CD4-positive, alpha-beta memory T cell (primary cell): ENCODE measurements at regions of chr6 and their contacts with region 1.

Region 1: GRCh38 chr6:111873178-111874024 is at the start of gene FYN:
- DNase-seq: peak; percentile 98
- H3K4me3 ChIP-seq: peak within 1 kb of the TSS; percentile 88 to 91
- H3K4me3 Mint-ChIP-seq: peak within 1 kb of the TSS; percentile 96 to 99 (median 98)
- H3K27ac ChIP-seq: peak within 1 kb of the TSS; percentile 88
- H3K27ac Mint-ChIP-seq: peak within 1 kb of the TSS; percentile 93 to 99 (median 98)
- H3K4me1 ChIP-seq: peaks cover 38% of the 10 kb centered on the region
- H3K4me1 Mint-ChIP-seq: peaks cover 27 to 55% (median 37%) of the 10 kb centered on the region in 4 donors
- H3K27me3 ChIP-seq: no peaks in the 10 kb centered on the region
- H3K27me3 Mint-ChIP-seq: no peaks in the 10 kb centered on the region
- total RNA-seq, gene FYN: 664 to 713 TPM

Region 2: DNA sequence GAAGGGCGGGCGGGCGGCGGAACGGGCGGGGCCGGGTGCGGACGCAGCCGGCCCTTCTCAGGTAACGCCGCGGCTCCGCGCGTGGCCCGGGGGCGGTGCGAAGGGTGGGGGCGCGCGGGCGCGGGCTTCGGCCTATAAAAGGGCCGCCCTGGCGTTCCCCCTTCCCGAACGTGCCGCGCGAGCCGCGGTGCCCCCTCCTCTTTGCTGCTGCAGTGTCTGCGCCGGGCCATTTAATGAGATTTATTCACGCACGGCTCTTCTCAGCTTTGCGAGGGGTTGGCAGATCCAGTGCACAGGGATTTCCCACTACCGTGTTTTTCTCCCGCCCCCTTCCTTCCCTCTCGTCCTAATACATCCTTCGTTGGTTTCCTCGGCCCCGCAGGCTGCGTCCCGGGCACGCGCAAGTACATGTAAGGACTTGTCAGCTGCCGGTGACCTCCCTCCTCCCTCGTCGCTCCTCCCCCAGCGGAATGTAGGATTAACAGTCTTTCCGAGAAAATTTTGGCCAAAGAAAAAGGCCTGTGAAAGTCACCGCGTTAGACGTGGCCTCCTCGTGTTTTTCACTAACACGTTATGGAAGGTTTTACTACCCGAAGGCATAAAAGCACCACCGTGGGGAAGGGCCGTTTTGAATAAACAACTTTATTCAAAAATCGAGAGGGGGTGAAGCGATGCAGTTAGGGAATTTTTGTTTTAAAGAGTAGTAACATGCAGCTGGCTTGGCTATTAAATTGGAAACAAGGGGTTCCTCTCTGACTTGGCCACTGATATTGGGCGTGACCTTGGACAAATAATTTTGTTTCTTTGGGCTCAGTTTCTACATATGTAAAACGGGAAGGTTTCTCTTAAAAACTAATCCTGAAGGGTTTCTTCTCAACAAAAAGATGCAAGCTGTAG is 389.4 kb before region 1 on chr6:
- CTCF ChIA-PET with region 1: no interaction called
- POLR2A ChIA-PET with region 1: no interaction called
- intact Hi-C with region 1: loop called (anchors 10 kb)
- DNase-seq: peak in 3 of 5 donors; percentile 89
- H3K4me3 ChIP-seq: peak overlapping the region; percentile 74
- H3K4me3 Mint-ChIP-seq: peak overlapping the region; percentile 91 to 99 (median 98)
- H3K27ac ChIP-seq: peak overlapping the region; percentile 80
- H3K27ac Mint-ChIP-seq: peak overlapping the region; percentile 97 to 100 (median 98)
- H3K4me1 ChIP-seq: peaks cover 57% of the 10 kb centered on the region
- H3K4me1 Mint-ChIP-seq: peaks cover 33 to 58% (median 45%) of the 10 kb centered on the region in 4 donors
- H3K27me3 ChIP-seq: no peaks in the 10 kb centered on the region
- H3K27me3 Mint-ChIP-seq: peaks cover 0 to 2% of the 10 kb centered on the region in 2 donors

Region 3: DNA sequence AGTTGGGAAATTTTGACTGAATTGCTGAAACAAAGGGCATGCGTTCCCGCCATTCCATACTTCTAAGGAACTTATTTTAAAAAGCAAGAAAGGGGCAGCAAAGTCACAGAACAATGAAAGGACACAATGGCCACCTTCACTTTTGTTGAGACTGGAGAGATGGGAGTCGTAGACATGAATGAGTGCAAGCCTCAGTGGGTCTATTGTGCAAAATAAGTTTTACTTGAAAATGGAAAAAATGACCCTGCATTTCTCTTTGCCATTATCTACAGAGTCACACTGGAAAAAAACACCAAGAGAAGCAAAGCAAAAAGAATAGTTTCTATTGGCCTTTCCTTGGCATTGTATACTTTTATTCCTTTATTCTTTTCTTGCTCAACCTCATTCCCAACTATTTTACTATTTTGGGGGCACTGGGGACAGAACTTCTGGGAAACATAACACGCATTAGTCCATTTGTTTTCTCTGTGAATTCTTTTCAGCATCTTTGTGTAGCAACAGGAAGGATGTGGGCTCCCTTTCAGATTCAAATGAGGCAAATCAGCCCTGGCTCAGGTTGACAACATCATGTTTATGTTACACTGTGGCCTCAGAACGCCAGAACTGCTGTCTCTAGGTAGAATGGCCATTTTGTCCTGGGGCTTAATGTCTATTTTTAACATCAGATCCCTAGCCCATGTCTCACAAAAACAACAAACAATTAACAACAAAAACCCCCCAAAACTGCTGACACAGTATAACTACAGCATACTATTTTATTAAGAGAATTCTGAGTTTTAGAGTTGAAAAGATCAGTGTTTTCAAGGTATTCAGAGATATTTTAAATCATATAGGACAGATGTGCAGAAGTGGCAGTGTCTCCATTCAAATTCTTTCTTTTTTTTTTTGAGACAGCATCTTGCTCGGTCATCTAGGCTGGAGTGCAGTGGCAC is 122.4 kb before region 1 on chr6:
- CTCF ChIA-PET with region 1: interaction called, 3 read pairs
- POLR2A ChIA-PET with region 1: interaction called, 32 read pairs
- intact Hi-C with region 1: no loop called
- DNase-seq: peak; percentile 82 to 89 (median 85)
- H3K4me3 ChIP-seq: peak overlapping the region in 1 of 2 donors; percentile 10
- H3K4me3 Mint-ChIP-seq: peak overlapping the region; percentile 58 to 91 (median 79)
- H3K27ac ChIP-seq: peak overlapping the region; percentile 74
- H3K27ac Mint-ChIP-seq: peak overlapping the region; percentile 97 to 100 (median 99)
- H3K4me1 ChIP-seq: peaks cover 100% of the 10 kb centered on the region
- H3K4me1 Mint-ChIP-seq: peaks cover 81 to 98% (median 90%) of the 10 kb centered on the region in 4 donors
- H3K27me3 ChIP-seq: no peaks in the 10 kb centered on the region
- H3K27me3 Mint-ChIP-seq: no peaks in the 10 kb centered on the region

Region 4: DNA sequence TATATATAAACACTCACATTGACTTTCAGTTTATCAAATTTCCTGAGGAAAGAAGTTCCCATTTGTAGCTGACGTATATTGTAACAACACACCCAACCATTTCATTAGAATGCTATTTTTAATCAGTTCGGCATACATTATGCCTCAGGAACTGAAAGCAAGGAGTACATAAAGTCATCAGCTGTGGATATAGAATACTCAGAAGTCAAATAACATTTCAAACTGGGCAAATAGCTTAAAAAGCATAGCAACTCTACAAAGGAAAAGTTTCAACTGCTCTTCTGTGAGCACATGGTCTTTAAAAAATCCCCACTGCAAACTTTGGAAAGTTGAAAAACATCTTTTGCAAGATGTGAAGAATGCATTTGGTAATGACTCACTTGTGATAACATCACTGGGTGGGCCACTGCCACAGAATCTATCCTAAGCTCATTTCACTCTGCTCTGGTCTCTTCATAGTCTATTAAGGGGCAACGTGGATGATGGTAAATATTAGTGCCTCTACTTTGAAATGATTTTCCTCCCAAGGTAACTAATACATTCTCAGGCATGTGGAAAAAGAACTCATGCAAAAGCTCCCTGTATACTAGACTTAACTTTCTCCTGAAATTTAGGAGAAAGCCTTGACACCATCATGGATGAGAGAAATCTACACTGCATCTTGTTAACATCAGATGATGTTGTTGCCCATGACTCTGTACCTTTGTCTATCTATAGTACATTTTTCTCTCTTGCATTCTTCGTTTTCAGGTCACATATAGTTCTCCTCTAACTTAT is 49.4 kb before region 1 on chr6:
- CTCF ChIA-PET with region 1: interaction called, 11 read pairs
- POLR2A ChIA-PET with region 1: interaction called, 7 read pairs
- intact Hi-C with region 1: no loop called
- DNase-seq: peak in 1 of 5 donors; percentile 73
- H3K4me3 ChIP-seq: no peak overlapping the region
- H3K4me3 Mint-ChIP-seq: peak overlapping the region; percentile 4 to 75 (median 58)
- H3K27ac ChIP-seq: peak overlapping the region; percentile 49
- H3K27ac Mint-ChIP-seq: peak overlapping the region; percentile 67 to 95 (median 87)
- H3K4me1 ChIP-seq: peaks cover 76% of the 10 kb centered on the region
- H3K4me1 Mint-ChIP-seq: peaks cover 64 to 82% (median 70%) of the 10 kb centered on the region in 4 donors
- H3K27me3 ChIP-seq: no peaks in the 10 kb centered on the region
- H3K27me3 Mint-ChIP-seq: no peaks in the 10 kb centered on the region

Region 5: DNA sequence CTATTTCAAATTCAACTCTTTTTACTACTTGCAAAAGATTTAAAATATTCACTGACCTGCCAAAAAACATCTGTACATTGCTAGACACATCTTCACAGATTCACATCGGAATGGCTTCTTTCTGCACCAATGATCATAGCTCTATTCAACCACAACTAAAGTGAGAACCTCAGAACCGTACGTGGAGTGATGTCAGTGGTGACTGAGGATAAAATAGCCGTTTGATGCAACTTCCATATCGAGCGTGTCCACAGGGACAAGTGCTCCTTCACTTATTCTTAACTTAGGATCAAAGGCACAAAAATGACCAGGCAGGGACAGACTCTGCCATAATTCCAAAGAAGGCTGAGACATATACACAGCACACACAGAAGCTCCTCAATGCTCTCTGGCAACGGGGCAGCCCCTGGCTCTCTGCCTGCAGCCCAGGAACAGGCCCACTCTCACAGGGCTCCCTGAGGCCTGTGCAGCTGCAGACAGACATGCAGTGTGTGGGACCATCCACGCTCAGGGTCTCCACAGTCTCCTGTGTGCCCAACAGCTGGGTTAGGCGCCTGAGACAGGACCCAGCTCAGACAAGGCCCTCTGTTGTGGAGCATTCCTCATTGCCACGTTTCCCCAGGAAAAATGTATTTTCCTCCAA is 23.0 kb before region 1 on chr6:
- CTCF ChIA-PET with region 1: interaction called, 13 read pairs
- POLR2A ChIA-PET with region 1: interaction called, 64 read pairs
- intact Hi-C with region 1: loop called (anchors 1 kb)
- DNase-seq: peak in 3 of 5 donors; percentile 36 to 55 (median 54)
- H3K4me3 ChIP-seq: no peak overlapping the region
- H3K4me3 Mint-ChIP-seq: peak overlapping the region in 7 of 8 donors; percentile 59 to 90 (median 73)
- H3K27ac ChIP-seq: peak overlapping the region; percentile 33
- H3K27ac Mint-ChIP-seq: peak overlapping the region; percentile 76 to 95 (median 87)
- H3K4me1 ChIP-seq: peaks cover 99% of the 10 kb centered on the region
- H3K4me1 Mint-ChIP-seq: peaks cover 66 to 82% (median 73%) of the 10 kb centered on the region in 4 donors
- H3K27me3 ChIP-seq: no peaks in the 10 kb centered on the region
- H3K27me3 Mint-ChIP-seq: no peaks in the 10 kb centered on the region

Region 6: DNA sequence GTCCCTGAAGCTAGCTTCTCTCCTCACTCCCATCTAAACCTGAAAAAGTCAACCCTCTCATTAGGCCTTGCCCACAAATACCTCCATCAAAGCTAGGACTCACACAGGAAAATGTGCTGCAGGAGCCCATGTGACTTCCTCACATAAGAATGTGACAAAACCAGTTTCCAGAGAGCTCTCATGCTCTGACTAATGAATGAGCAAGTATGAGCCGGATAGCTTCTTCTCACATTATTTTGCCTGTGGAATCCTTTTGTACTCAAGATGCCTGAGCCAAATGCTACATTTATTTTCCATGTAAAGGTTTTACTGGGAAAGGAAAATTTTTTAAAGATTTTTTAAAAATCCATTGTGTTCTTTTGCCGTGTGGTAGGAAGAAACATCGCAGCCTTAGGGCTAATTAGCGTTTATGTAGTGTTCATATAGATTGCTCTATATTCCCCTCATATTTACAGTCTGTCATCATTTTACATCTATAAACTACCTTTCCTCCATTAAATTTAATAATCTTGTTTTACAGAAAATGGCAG is 111.9 kb after region 1 on chr6:
- CTCF ChIA-PET with region 1: interaction called, 3 read pairs
- POLR2A ChIA-PET with region 1: interaction called, 12 read pairs
- intact Hi-C with region 1: no loop called
- DNase-seq: peak in 4 of 5 donors; percentile 33 to 70 (median 43)
- H3K4me3 ChIP-seq: no peak overlapping the region
- H3K4me3 Mint-ChIP-seq: peak overlapping the region in 6 of 8 donors; percentile 7 to 74 (median 25)
- H3K27ac ChIP-seq: no peak overlapping the region
- H3K27ac Mint-ChIP-seq: peak overlapping the region; percentile 42 to 89 (median 70)
- H3K4me1 ChIP-seq: peaks cover 70% of the 10 kb centered on the region
- H3K4me1 Mint-ChIP-seq: peaks cover 47 to 85% (median 72%) of the 10 kb centered on the region in 4 donors
- H3K27me3 ChIP-seq: no peaks in the 10 kb centered on the region
- H3K27me3 Mint-ChIP-seq: no peaks in the 10 kb centered on the region

Region 7: GRCh38 chr6:112054001-112054400 is 180.6 kb after region 1 on chr6 and contains the start of gene CCN6:
- CTCF ChIA-PET with region 1: no interaction called
- POLR2A ChIA-PET with region 1: no interaction called
- intact Hi-C with region 1: no loop called
- DNase-seq: no peak
- H3K4me3 ChIP-seq: no peak within 1 kb of the TSS
- H3K4me3 Mint-ChIP-seq: no peak within 1 kb of the TSS
- H3K27ac ChIP-seq: no peak within 1 kb of the TSS
- H3K27ac Mint-ChIP-seq: no peak within 1 kb of the TSS
- H3K4me1 ChIP-seq: no peaks in the 10 kb centered on the region
- H3K4me1 Mint-ChIP-seq: no peaks in the 10 kb centered on the region
- H3K27me3 ChIP-seq: no peaks in the 10 kb centered on the region
- H3K27me3 Mint-ChIP-seq: peaks cover 1 to 3% of the 10 kb centered on the region in 2 donors
- total RNA-seq, gene CCN6: not detected

Region 8: DNA sequence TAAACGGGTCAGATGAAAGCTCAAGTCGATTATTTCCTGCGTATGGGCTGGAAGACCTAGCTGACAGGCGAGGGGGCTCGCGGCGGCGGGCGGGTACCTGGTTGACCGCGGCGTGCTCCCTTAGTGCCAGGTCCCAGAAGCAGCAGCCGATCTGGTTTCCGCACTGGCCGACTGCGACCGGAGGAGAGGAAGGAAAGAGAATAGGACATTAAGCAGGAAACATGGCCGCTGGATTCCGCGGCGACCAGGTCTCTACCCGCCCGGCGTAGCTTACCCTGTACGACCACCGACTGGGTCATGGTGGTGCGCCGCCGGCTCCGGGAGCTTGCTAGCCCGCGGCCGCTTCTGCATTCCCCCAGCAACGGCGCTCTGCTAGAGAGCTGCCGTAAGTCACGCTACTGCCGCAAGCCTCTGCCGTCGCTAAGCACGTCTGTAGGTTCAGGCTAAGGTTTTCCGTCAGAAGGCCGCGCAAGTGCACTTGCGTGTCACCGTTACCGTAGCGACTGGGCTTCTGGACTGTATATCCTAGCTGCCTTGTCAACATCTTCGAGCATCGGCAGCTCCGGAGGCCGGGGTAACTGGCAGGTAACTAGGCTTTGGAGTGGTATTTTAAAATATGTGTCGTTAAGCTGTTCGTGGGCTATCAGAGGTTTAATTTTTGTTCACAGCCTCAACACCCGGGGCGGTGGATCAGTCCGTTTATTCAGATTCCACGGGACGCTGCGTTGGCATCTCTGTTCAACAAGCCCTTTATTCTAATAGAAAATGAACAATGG is 213.9 kb after region 1 on chr6 and contains the starts of genes FAM229B and TUBE1:
- CTCF ChIA-PET with region 1: no interaction called
- POLR2A ChIA-PET with region 1: no interaction called
- intact Hi-C with region 1: loop called (anchors 2 kb)
- DNase-seq: peak; percentile 89 to 97 (median 93)
- H3K4me3 ChIP-seq: peak within 1 kb of the TSS; percentile 31 to 80
- H3K4me3 Mint-ChIP-seq: no peak within 1 kb of the TSS
- H3K27ac ChIP-seq: peak within 1 kb of the TSS; percentile 78
- H3K27ac Mint-ChIP-seq: peak within 1 kb of the TSS in 1 of 7 donors; percentile 59
- H3K4me1 ChIP-seq: peaks cover 15% of the 10 kb centered on the region
- H3K4me1 Mint-ChIP-seq: peaks cover 6 to 15% (median 8%) of the 10 kb centered on the region in 4 donors
- H3K27me3 ChIP-seq: peaks cover 15% of the 10 kb centered on the region
- H3K27me3 Mint-ChIP-seq: peaks cover 13 to 17% of the 10 kb centered on the region in 2 donors
- total RNA-seq, gene FAM229B: 1.7 to 1.9 TPM
- total RNA-seq, gene TUBE1: 40.6 to 45.2 TPM